Pancreas (tissue), 10 donors: ENCODE measurements at regions of chr3 and their contacts with region 1.

Region 1: GRCh38 chr3:16050641-16051467 is 123.6 kb upstream of the GALNT15 start:
- DNase-seq: no peak
- ATAC-seq: peak in 1 of 4 donors; percentile 36
- H3K4me3 ChIP-seq: no peak overlapping the region
- H3K27ac ChIP-seq: no peak overlapping the region
- H3K4me1 ChIP-seq: no peaks in the 10 kb centered on the region
- H3K27me3 ChIP-seq: no peaks in the 10 kb centered on the region
- CTCF ChIP-seq: no peak

Region 2: GRCh38 chr3:16177962-16178627 is 127.2 kb after region 1 on chr3:
- intact Hi-C with region 1: loop called in 2 of 3 experiments (anchors 5 to 10 kb)
- DNase-seq: peak; percentile 48 to 92 (median 78)
- ATAC-seq: peak; percentile 89 to 94 (median 90)
- H3K4me3 ChIP-seq: no peak overlapping the region
- H3K27ac ChIP-seq: no peak overlapping the region
- H3K4me1 ChIP-seq: no peaks in the 10 kb centered on the region
- H3K27me3 ChIP-seq: no peaks in the 10 kb centered on the region
- CTCF ChIP-seq: peak; percentile 86 to 93 (median 89)